Psoas muscle (tissue), 8 donors: ENCODE measurements at regions of chrX and their contacts with region 1.

Region 1: DNA sequence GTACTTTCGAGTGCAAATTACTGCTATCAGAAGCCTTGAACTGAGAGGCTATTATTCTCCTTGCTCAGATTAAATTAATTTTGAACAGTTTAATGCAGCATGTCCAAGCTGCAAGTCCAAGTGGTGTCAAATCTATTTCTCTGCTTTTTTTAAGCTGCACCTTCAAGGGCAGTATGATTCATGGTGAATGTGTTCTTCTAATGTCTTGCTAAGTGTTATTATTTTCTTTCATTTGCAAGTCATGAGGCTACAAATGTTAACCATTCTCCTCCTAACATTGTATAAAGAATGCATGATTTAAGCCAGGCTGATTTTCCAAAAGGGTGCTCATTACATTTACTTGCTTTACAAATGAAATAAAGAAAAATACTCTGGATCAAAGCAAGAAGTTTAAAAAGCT is 200.4 kb downstream of the TEX13C start:
- DNase-seq: no peak
- ATAC-seq: no peak
- H3K4me3 ChIP-seq: no peak overlapping the region
- H3K27ac ChIP-seq: no peak overlapping the region
- H3K4me1 ChIP-seq: no peaks in the 10 kb centered on the region
- H3K27me3 ChIP-seq: no peaks in the 10 kb centered on the region
- CTCF ChIP-seq: no peak

Region 2: GRCh38 chrX:125340490-125340889 is 179.5 kb before region 1 on chrX:
- intact Hi-C with region 1: no loop called
- DNase-seq: no peak
- ATAC-seq: no peak
- H3K4me3 ChIP-seq: no peak overlapping the region
- H3K27ac ChIP-seq: no peak overlapping the region
- H3K4me1 ChIP-seq: no peaks in the 10 kb centered on the region
- H3K27me3 ChIP-seq: no peaks in the 10 kb centered on the region
- CTCF ChIP-seq: no peak

Region 3: DNA sequence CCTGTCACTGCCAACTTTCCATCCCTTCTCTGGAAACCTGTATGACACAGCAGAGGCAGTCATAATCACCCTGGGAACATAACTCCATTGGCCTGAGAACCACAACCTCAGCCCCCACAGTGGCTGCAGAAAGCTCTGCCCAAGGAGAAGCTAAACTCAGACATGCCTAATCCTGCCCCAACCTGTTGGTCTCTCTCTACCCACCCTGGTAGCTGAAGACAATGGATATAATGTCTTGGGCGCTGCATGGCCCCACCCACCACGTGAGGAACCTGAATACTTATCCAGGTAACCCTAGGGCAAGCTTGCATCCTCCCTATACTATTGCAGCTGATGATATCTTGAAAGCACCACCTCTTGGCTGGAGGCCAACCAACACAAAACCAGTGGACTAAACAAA is 24.8 kb after region 1 on chrX:
- intact Hi-C with region 1: loop called in 1 of 2 experiments (anchors 2 kb)
- DNase-seq: no peak
- ATAC-seq: no peak
- H3K4me3 ChIP-seq: no peak overlapping the region
- H3K27ac ChIP-seq: no peak overlapping the region
- H3K4me1 ChIP-seq: no peaks in the 10 kb centered on the region
- H3K27me3 ChIP-seq: no peaks in the 10 kb centered on the region
- CTCF ChIP-seq: no peak